Activated CD4-positive, alpha-beta memory T cell treated with anti-CD3 and anti-CD28 coated beads for 36 hours (primary cell): ENCODE measurements at regions of chr6 and their contacts with region 1.

Region 1: DNA sequence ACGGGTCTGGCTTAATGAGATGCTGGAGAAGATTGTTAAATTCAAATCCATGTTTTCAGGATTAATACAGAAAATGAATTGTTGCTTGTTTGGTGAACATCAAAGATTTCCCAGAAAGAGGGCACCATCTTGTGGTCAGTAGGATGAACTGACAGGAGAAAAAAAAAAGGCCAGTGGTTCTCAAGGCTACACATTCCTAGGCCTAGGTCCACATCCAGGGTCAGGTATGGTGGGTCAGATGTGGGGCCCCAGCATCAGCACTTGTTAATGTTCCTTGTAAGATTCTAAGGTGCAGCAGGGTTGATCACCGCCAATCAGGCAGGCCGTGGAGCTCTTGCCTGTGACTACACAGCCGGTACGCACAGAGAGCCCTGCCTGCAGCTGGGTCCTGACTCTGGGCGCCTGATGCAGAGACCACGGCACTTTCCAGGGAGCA is 34.0 kb upstream of the FOXO3 start:
- DNase-seq: no peak
- H3K4me3 Mint-ChIP-seq: no peak overlapping the region
- H3K27ac Mint-ChIP-seq: no peak overlapping the region
- H3K4me1 Mint-ChIP-seq: no peaks in the 10 kb centered on the region
- H3K27me3 Mint-ChIP-seq: no peaks in the 10 kb centered on the region

Region 2: DNA sequence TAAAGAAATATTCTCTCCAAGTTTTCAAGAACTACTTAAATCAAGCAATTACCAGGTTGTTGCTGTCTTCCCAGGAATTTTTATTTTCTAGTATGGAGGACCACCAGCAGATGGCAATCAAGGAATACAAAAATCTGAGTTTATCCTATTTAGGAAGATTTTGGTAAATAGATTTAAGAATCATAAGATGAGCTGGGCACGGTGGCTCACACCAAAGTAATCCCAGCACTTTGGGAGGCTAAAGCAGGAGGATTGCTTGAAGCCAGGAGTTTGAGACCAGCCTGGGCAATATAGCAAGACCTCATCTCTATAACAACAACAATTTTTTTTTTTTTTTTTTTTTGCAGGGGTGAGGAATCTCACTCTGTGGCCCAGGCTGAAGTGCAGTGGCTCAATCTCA is 549.5 kb before region 1 on chr6:
- CTCF ChIA-PET with region 1: interaction called, 4 read pairs
- POLR2A ChIA-PET with region 1: no interaction called
- intact Hi-C with region 1: loop called (anchors 1 kb)
- DNase-seq: no peak
- H3K4me3 Mint-ChIP-seq: no peak overlapping the region
- H3K27ac Mint-ChIP-seq: no peak overlapping the region
- H3K4me1 Mint-ChIP-seq: no peaks in the 10 kb centered on the region
- H3K27me3 Mint-ChIP-seq: no peaks in the 10 kb centered on the region

Region 3: DNA sequence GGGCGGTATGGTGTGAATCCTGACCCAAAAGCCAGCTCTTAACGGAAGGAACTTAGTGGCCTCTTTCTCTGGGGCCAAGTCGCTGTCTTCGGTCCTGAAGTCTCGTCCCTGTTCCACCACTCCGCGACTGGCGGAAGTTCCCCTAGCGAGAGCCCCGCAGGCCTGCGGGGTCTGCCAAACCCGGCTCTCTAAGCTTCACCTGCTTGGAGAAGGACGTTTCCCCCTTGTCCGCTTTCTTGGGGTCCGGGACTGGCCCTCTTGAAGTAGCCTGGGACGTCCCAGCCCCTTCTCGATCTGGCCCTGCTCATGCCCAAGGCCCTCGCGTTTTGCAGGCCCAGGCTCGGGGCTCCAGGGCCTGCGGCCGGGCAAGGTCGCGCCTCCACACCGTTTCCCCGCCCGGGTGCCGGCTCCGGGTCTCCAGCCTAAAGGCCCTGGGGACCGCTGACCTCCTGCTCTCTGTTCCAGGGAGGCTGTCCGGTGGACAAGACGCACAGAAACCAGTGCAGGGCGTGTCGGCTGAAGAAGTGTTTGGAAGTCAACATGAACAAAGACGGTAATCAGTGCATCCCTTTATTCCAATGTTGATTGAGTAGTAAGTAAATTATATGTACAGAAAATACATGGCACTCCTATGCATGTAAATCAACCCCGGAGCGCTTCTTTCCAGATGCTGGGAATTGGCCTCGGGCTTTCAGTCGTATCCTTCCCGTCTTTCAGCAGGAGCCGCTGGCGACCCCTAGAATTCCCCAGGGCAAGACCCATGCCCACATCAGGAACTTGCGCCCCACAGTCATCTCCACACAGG is 352.2 kb before region 1 on chr6:
- CTCF ChIA-PET with region 1: no interaction called
- POLR2A ChIA-PET with region 1: no interaction called
- intact Hi-C with region 1: loop called (anchors 5 kb)
- DNase-seq: peak; percentile 43
- H3K4me3 Mint-ChIP-seq: no peak overlapping the region
- H3K27ac Mint-ChIP-seq: no peak overlapping the region
- H3K4me1 Mint-ChIP-seq: peaks cover 18% of the 10 kb centered on the region
- H3K27me3 Mint-ChIP-seq: peaks cover 79% of the 10 kb centered on the region

Region 4: DNA sequence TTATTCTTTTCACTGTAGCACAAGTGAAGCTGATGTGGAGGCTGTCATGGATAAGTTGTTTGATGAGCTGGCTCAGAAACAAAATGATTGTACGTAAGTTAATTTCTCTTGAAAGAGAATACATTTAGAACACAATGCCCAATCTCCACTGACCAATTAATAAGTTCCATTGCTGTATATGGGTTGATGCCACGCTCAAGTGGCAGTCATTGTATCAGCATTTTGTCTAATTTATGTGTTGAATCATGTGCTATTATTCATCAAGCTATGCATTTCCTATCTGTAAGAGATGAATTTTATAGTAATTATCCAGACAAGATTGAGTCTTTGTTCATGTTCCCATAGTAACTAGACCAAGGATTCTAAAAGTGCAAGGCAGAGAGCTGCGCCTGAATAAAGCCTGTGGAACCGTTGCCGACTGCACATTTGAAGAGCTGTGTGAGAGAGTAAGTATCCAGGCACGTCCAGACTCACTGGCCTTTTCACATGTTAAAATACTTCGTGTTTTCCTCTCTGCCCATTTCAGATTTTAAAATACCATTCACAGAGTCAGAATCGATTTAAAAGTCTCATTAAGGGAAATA is 49.8 kb before region 1 on chr6:
- CTCF ChIA-PET with region 1: no interaction called
- POLR2A ChIA-PET with region 1: no interaction called
- intact Hi-C with region 1: no loop called
- DNase-seq: no peak
- H3K4me3 Mint-ChIP-seq: no peak overlapping the region
- H3K27ac Mint-ChIP-seq: no peak overlapping the region
- H3K4me1 Mint-ChIP-seq: peaks cover 3% of the 10 kb centered on the region
- H3K27me3 Mint-ChIP-seq: no peaks in the 10 kb centered on the region

Region 5: DNA sequence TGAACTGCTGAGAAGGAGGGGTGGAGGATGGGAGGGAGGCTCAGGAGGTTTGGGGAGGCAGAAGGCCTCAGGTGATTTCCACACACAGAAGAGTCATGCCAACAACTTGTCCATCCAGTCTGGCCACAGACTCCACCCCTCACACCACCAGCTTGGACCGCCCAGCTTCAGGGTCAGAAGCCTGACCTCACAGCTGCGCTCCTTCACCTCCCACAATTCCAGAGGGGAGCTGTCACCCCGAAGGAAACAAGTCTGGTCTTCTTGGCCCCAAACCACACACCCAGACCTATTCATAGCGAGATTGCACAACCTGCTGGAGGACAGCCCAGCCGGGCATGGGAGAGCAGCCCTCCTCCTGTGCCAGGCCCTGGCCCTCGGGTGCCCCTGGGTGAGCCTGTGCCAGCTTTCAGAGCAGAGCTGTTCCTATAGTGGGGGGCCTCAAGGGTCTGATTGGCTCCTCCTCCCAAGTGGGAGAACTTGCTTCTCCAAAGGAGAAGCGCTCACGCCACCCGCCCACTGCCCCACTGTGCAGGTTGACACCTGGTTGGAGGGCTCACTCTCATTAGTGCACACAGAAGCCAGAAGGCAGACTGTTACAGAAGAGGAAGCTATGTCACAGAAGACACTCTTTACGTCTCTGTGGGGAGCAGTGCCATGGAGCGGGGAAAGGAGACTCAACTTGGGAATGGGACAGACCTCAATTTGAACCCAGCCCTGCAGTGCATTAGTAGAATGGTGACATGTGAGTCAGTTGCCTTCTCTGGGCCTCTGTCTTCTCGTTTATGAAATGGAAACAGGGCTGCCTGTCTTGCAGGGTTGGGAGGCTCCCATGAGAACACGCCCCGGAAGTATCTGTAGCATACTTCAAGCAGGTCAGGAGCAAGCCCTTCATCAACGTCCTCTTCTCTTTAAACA is 162.7 kb after region 1 on chr6:
- CTCF ChIA-PET with region 1: no interaction called
- POLR2A ChIA-PET with region 1: no interaction called
- intact Hi-C with region 1: no loop called
- DNase-seq: no peak
- H3K4me3 Mint-ChIP-seq: no peak overlapping the region
- H3K27ac Mint-ChIP-seq: no peak overlapping the region
- H3K4me1 Mint-ChIP-seq: peaks cover 5% of the 10 kb centered on the region
- H3K27me3 Mint-ChIP-seq: no peaks in the 10 kb centered on the region